ENCODE measurements at regions of chr1 and their contacts with region 1.

Region 1: DNA sequence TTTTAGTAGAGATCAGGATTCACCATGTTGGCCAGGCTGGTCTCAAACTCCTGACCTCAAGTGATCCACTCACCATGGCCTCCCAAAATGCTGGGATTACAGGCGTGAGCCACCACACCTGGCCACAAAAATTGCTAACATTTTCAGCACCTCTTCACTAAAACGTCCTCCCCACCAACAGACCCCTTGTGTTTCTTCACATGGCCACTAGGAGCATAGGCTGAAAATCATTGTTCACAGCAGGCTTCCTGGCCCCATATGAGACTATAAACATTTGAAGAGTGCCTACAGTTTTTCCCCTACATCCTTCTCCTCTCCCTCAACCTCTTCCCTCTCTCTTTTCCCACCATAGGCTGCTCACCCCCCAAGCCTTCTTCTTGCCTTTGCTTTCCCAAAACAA is 28.0 kb upstream of the SFPQ start:
- DNase-seq: peak; percentile 20
- ATAC-seq: peak; percentile 87
- H3K4me3 Mint-ChIP-seq: no peak overlapping the region
- H3K27ac Mint-ChIP-seq: peak overlapping the region; percentile 80
- H3K4me1 Mint-ChIP-seq: peaks cover 31% of the 10 kb centered on the region
- H3K27me3 Mint-ChIP-seq: no peaks in the 10 kb centered on the region
- CTCF ChIP-seq: no peak

Region 2: GRCh38 chr1:35202048-35202719 is 18.8 kb before region 1 on chr1:
- CTCF ChIA-PET with region 1: interaction called, 17 read pairs
- POLR2A ChIA-PET with region 1: no interaction called
- DNase-seq: peak; percentile 76
- ATAC-seq: peak; percentile 99
- H3K4me3 Mint-ChIP-seq: no peak overlapping the region
- H3K27ac Mint-ChIP-seq: no peak overlapping the region
- H3K4me1 Mint-ChIP-seq: peaks cover 12% of the 10 kb centered on the region
- H3K27me3 Mint-ChIP-seq: no peaks in the 10 kb centered on the region
- CTCF ChIP-seq: peak; percentile 55

Region 3: DNA sequence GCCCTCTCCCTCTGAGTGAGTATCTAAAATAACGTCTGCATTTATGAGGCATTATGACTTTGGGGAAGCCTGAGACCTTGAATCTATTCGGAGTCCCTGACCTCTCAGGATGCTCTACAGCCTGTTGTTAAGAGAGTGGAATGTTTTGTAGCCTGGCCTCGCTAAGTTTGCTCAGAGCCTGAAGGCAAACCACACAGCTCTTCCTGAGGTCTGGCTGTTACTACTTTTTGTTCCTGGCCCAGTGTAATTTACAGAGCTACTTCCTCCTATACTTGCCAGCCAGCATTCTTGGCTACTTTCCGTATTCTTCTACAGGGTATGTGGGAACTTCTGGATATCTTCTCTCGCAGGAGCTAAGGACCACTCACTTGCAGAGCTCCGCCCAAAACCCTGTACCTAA is 43.9 kb after region 1 on chr1:
- CTCF ChIA-PET with region 1: interaction called, 10 read pairs
- POLR2A ChIA-PET with region 1: no interaction called
- DNase-seq: no peak
- ATAC-seq: peak; percentile 17
- H3K4me3 Mint-ChIP-seq: no peak overlapping the region
- H3K27ac Mint-ChIP-seq: peak overlapping the region; percentile 3
- H3K4me1 Mint-ChIP-seq: peaks cover 23% of the 10 kb centered on the region
- H3K27me3 Mint-ChIP-seq: no peaks in the 10 kb centered on the region; the same call in 1 of the 2 replicates
- CTCF ChIP-seq: no peak

Region 4: DNA sequence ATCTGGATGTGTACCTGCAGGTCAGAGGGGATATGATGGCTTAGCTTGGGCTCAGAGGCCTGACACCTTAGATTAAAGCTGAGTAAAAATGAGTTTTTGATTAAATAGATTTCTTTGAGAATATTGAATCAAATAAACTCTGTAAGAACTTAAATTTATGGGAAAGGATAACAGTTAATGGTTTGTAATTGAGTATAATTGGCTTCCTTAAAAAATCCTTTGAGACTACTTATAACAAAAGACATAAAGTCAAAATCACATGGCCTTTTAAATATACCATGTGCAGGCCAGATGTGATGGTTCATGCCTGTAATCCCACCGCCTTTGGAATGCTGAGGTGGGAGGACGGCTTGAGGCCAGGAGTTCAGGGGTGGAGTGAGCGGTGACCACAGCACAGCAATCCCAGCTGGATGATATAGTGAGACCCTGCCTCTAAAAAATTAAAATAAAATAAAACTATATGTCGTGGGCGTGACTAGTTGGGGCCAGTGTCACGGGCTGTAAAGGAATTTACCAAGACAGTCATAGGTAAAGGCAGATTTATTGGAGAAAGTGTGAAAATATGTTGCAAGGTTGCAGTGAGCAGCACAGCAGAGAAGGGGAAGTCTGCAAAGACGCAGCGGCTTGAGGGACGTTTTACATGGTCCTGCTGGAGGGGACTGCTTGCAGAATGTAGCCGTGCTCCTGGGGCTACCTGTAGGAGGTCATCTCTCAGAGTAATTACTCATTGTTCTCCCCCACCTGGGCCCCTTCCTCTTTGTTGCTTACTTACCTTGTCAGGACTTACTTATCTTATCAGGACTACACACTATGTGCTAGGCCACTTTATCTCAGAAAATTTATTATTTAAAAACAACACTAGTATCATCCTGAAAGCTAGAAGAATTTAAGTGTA is 169.9 kb after region 1 on chr1:
- CTCF ChIA-PET with region 1: no interaction called
- POLR2A ChIA-PET with region 1: no interaction called
- DNase-seq: peak; percentile 56
- ATAC-seq: peak; percentile 88
- H3K4me3 Mint-ChIP-seq: peak overlapping the region; percentile 19
- H3K27ac Mint-ChIP-seq: peak overlapping the region; percentile 98
- H3K4me1 Mint-ChIP-seq: peaks cover 75% of the 10 kb centered on the region
- H3K27me3 Mint-ChIP-seq: no peaks in the 10 kb centered on the region
- CTCF ChIP-seq: no peak